Vagina (tissue), 2 donors: ENCODE measurements at regions of chr13 and their contacts with region 1.

Region 1: DNA sequence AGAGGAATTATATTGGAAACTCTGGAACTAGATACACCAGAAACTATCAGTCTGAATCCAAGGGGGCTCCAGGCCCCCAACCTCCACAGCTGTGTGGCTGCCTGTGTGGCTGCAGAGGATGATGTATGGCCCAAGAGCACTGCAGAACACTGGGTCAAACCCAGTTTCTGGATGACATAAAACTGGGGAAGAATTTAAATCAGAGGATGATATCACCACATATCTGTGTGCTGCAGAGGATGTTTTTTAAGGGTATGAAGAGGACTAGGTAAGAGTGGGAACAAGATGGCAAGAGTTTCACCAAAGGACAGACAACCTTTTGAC is 226.4 kb downstream of the SUCLA2 start:
- DNase-seq: no peak
- H3K4me3 ChIP-seq: no peak overlapping the region
- H3K27ac ChIP-seq: no peak overlapping the region
- H3K4me1 ChIP-seq: no peaks in the 10 kb centered on the region
- H3K27me3 ChIP-seq: no peaks in the 10 kb centered on the region
- CTCF ChIP-seq: no peak
- POLR2A ChIP-seq: no peak

Region 2: GRCh38 chr13:46831588-46832194 is 942.9 kb before region 1 on chr13:
- intact Hi-C with region 1: loop called (anchors 10 kb)
- DNase-seq: no peak
- H3K4me3 ChIP-seq: no peak overlapping the region
- H3K27ac ChIP-seq: no peak overlapping the region
- H3K4me1 ChIP-seq: no peaks in the 10 kb centered on the region
- H3K27me3 ChIP-seq: no peaks in the 10 kb centered on the region
- CTCF ChIP-seq: peak; percentile 63 to 76 (median 68)
- POLR2A ChIP-seq: no peak

Region 3: DNA sequence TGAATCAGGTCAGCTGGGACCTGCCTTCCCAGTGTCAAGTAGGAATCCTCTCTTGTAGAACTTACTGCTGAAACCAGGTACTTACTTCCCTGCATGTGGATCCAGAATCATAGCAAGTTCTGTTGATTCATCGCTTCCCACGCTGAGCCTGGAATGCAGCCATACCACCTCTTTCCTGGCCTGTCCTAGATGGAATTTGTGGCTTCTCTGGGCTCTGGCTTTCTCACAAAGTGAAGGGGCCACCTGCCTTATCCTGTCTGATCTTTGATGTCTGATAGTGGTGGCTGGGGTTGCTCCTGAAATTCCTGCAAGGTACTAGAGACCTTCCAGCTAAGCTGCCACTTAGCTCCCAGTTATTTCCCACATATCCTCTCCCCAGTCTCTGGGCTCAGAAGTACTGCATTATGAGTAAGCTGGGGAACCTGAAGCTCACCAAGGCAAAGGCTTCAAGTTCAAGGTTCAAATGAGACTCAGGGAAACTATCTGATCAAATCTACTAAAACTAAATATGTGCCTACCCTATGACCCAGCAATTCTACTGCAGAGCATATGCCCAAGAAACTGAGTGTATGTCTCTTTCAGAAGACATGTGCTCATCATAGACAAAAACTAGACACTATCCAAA is 122.9 kb after region 1 on chr13:
- intact Hi-C with region 1: no loop called
- DNase-seq: no peak
- H3K4me3 ChIP-seq: no peak overlapping the region
- H3K27ac ChIP-seq: no peak overlapping the region
- H3K4me1 ChIP-seq: no peaks in the 10 kb centered on the region
- H3K27me3 ChIP-seq: no peaks in the 10 kb centered on the region
- CTCF ChIP-seq: no peak
- POLR2A ChIP-seq: no peak